Heart left ventricle (tissue), 16 donors: ENCODE measurements at regions of chr11 and their contacts with region 1.

Region 1: GRCh38 chr11:123246749-123247495 is 51.9 kb upstream of the CLMP start:
- DNase-seq: peak; percentile 74 to 86 (median 78)
- ATAC-seq: peak; percentile 35 to 84 (median 80)
- H3K4me3 ChIP-seq: no peak overlapping the region
- H3K27ac ChIP-seq: no peak overlapping the region
- H3K4me1 ChIP-seq: peaks cover 0 to 12% (median 4%) of the 10 kb centered on the region in 12 donors
- H3K27me3 ChIP-seq: peaks cover 0 to 3% (median 0%) of the 10 kb centered on the region in 9 donors
- CTCF ChIP-seq: peak; percentile 94 to 99 (median 98)
- POLR2A ChIP-seq: no peak

Region 2: GRCh38 chr11:122874991-122875390 is 371.9 kb before region 1 on chr11:
- intact Hi-C with region 1: loop called in 1 of 10 experiments (anchors 10 kb)
- DNase-seq: no peak
- ATAC-seq: no peak
- H3K4me3 ChIP-seq: no peak overlapping the region
- H3K27ac ChIP-seq: no peak overlapping the region
- H3K4me1 ChIP-seq: no peaks in the 10 kb centered on the region
- H3K27me3 ChIP-seq: peaks cover 0 to 9% (median 0%) of the 10 kb centered on the region in 9 donors
- CTCF ChIP-seq: no peak
- POLR2A ChIP-seq: no peak

Region 3: GRCh38 chr11:123103326-123103980 is 143.5 kb before region 1 on chr11:
- intact Hi-C with region 1: loop called in 1 of 10 experiments (anchors 2 kb)
- DNase-seq: peak in 4 of 5 donors; percentile 54 to 75 (median 72)
- ATAC-seq: peak; percentile 83 to 94 (median 88)
- H3K4me3 ChIP-seq: peak overlapping the region in 1 of 12 donors; percentile 5
- H3K27ac ChIP-seq: peak overlapping the region; percentile 18 to 72 (median 58)
- H3K4me1 ChIP-seq: peaks cover 0 to 43% (median 21%) of the 10 kb centered on the region in 12 donors
- H3K27me3 ChIP-seq: no peaks in the 10 kb centered on the region
- CTCF ChIP-seq: peak; percentile 51 to 77 (median 66)
- POLR2A ChIP-seq: no peak

Region 4: DNA sequence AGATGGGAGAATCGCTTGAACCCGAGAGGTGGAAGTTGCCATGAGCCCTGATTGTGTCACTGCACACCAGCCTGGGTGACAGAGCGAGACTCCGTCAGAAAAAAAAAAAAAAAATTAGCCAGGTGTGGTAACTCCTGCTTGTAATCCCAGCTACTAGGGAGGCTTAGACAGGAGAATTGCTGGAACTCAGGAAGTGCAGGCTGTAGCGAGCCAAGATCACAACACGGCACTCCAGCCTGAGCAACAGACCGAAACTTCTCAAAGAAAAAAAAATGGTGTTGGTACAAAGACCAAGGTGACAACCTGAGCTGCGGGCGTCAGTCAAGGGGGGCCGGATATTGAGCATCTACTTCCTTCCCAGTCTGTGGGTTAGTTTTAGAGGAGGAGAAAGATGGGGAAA is 136.6 kb before region 1 on chr11:
- intact Hi-C with region 1: loop called (anchors 1 to 5 kb)
- DNase-seq: no peak
- ATAC-seq: no peak
- H3K4me3 ChIP-seq: no peak overlapping the region
- H3K27ac ChIP-seq: peak overlapping the region in 1 of 12 donors; percentile 17
- H3K4me1 ChIP-seq: peaks cover 0 to 6% (median 0%) of the 10 kb centered on the region in 12 donors
- H3K27me3 ChIP-seq: no peaks in the 10 kb centered on the region
- CTCF ChIP-seq: no peak
- POLR2A ChIP-seq: no peak

Region 5: GRCh38 chr11:123174196-123175183 is 72.4 kb before region 1 on chr11:
- intact Hi-C with region 1: no loop called
- DNase-seq: peak in 2 of 5 donors; percentile 58 to 66
- ATAC-seq: peak; percentile 50 to 87 (median 80)
- H3K4me3 ChIP-seq: no peak overlapping the region
- H3K27ac ChIP-seq: peak overlapping the region in 5 of 12 donors; percentile 3 to 76 (median 15)
- H3K4me1 ChIP-seq: peaks cover 0 to 27% (median 6%) of the 10 kb centered on the region in 12 donors
- H3K27me3 ChIP-seq: peaks cover 0 to 4% (median 0%) of the 10 kb centered on the region in 9 donors
- CTCF ChIP-seq: no peak
- POLR2A ChIP-seq: no peak

Region 6: DNA sequence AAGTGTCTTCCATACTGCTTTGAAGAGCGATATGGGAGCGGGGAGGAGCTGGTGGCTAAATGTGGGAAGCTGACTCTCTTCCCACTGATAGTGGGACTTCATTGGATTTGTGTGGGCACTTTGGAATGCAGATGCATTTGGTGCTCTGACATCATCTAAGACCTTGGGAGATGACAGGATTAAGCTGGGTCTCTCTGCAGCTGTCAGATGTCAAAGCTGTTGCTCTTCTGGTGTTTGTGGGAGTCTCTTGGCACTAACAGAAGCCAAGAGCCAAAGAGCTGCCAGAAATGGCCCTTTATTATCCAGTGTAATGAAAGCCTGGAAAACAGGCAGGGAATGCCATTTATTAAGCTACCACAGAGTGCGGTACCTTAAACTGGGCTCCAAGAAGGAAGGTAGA is 203.7 kb after region 1 on chr11:
- intact Hi-C with region 1: no loop called
- DNase-seq: peak in 2 of 5 donors; percentile 23 to 34
- ATAC-seq: peak; percentile 39 to 77 (median 74)
- H3K4me3 ChIP-seq: no peak overlapping the region
- H3K27ac ChIP-seq: peak overlapping the region in 9 of 12 donors; percentile 23 to 78 (median 66)
- H3K4me1 ChIP-seq: peaks cover 0 to 52% (median 23%) of the 10 kb centered on the region in 12 donors
- H3K27me3 ChIP-seq: no peaks in the 10 kb centered on the region
- CTCF ChIP-seq: no peak
- POLR2A ChIP-seq: no peak